GM10248 (cell line): ENCODE measurements at regions of chr7 and their contacts with region 1.

Region 1: DNA sequence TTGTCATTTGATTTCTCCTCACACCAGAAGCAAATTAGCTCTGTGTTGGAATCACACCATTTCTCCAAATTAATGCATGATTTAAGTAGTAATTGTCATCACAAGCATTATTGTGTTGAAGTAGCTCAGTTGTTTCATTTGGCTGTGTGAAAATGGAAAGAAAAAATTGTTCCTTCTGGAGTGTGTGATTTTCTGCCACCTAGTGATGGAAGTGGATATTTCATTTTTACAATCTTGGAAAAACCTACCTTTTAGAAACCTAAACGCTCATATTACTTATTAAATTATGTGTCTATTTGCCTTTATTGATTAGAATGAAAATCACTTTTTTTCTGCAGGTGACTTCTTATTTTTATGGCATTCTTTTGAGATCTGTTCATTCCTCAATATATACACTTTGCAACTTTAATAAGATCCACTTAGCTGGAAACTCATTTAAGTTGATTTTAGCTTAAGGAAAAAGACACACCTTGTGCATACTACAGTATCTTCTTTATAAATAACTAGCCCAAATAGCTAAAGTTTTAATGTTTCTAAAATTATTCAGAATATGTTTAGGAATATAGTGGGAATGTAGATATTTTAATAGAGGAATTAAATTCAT is 50.0 kb downstream of the SRI start:
- DNase-seq: peak; percentile 7
- CTCF ChIP-seq: peak; percentile 50

Region 2: GRCh38 chr7:87506246-87507180 is 663.3 kb before region 1 on chr7:
- CTCF ChIA-PET with region 1: interaction called, 10 read pairs
- POLR2A ChIA-PET with region 1: no interaction called
- DNase-seq: no peak
- CTCF ChIP-seq: peak; percentile 32

Region 3: DNA sequence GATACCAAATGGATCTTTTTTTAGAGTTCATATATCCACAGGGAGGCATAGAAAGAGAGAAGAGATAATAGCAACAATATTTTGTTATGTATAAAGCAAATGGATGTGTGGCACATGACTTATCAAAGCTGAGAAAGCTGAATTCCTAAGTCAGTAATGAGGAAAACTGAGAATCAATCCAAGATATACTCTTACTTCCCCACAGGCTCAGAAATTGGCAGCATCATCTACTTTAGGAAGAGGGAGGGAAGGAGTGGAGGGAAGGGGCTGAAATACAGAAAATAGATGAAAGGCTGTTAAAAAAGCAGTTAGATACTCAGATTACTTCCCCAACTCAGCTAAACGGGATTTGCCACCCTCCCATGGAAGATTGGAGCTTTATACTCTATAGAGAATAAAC is 13.5 kb before region 1 on chr7:
- CTCF ChIA-PET with region 1: interaction called, 16 read pairs
- POLR2A ChIA-PET with region 1: no interaction called
- DNase-seq: no peak
- CTCF ChIP-seq: no peak

Region 4: GRCh38 chr7:88184848-88185304 is 15.1 kb after region 1 on chr7:
- CTCF ChIA-PET with region 1: interaction called, 15 read pairs
- POLR2A ChIA-PET with region 1: no interaction called
- DNase-seq: no peak
- CTCF ChIP-seq: no peak

Region 5: GRCh38 chr7:88200789-88201188 is 31.0 kb after region 1 on chr7:
- CTCF ChIA-PET with region 1: interaction called, 11 read pairs
- POLR2A ChIA-PET with region 1: no interaction called
- DNase-seq: no peak
- CTCF ChIP-seq: no peak